ENCODE measurements at regions of chr5 and their contacts with region 1.

Region 1: GRCh38 chr5:16616536-16617273 is at the start of gene RETREG1:
- DNase-seq: peak; percentile 63 to 97 (median 76)

Region 2: DNA sequence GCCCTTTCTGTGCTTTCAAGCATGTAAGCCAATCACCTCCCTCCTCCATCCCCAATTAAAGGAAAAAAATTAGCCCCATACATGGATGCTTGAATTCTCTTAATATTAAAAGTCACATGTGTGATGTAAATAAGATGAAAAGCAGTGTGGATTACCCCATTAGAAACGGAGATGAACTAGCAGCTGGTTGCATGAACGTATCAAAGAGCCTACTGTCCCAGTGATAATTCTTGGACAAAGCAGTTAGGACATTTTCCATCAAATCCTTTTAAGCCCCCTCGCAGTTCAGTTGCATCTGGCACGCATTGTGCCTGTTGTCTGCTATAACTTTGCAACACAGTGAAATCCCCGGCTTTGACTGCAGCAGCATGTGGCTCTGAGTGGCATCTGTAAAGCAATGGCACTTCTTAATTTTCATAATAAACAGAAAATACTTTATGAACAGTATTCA is 831.1 kb before region 1 on chr5:
- intact Hi-C with region 1: no loop called
- DNase-seq: peak in 3 of 10 donors; percentile 21 to 83 (median 40)

Region 3: DNA sequence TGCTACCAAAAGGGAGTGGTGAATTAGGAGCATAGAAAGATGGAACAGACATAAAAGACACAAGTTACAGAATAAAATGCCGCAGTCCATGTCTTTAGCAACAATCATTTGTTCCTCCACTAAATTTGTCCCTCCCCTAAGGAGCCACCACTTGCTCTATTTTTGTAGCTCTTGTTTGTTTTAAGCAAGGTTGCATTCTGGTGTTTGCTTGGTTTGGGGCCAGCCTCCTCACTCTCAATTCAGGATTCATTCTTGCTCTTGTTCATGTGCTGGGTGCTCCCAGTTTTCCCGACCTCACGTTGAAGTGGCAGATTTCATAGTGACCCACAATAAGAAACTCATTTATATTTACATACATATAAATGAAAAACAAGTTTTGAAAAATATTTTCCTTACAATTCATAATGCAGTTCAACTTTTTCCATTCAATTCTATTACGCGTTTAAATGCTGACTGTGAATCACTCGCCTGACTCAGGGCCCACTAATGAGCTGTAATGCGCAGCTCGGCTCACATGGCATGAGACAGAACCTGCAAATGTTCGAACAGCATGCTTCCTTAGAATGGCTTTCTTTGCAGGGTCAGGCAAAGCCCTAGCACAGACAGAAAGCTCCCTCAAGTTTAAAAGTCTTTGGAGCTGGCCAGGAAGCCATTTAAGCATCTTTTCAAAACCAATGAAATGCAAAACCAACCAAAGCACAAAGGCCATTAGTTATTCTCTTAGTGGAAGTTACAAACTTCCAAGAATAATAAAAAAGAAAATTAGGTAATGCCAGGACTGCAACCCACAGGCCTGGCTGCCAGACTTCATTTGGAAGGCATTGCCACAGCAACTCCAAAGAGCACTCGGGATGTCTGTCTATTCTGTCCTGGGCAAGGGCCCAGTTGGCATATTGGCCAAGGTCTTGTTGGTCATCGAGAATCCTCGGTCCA is 41.6 kb before region 1 on chr5:
- intact Hi-C with region 1: loop called (anchors 5 kb)
- DNase-seq: peak in 7 of 10 donors; percentile 41 to 92 (median 75)

Region 4: GRCh38 chr5:16690243-16690852 is 73.6 kb after region 1 on chr5:
- intact Hi-C with region 1: no loop called
- DNase-seq: peak in 6 of 10 donors; percentile 26 to 90 (median 64)